Prostate gland (tissue), 2 donors: ENCODE measurements at regions of chr13 and their contacts with region 1.

Region 1: GRCh38 chr13:99176309-99177276 is 24.1 kb upstream of the UBAC2 start:
- DNase-seq: peak; percentile 69
- H3K4me3 ChIP-seq: no peak overlapping the region
- H3K27ac ChIP-seq: no peak overlapping the region
- H3K4me1 ChIP-seq: no peaks in the 10 kb centered on the region
- H3K27me3 ChIP-seq: no peaks in the 10 kb centered on the region
- CTCF ChIP-seq: peak; percentile 86 to 95 (median 90)
- POLR2A ChIP-seq: no peak

Region 2: DNA sequence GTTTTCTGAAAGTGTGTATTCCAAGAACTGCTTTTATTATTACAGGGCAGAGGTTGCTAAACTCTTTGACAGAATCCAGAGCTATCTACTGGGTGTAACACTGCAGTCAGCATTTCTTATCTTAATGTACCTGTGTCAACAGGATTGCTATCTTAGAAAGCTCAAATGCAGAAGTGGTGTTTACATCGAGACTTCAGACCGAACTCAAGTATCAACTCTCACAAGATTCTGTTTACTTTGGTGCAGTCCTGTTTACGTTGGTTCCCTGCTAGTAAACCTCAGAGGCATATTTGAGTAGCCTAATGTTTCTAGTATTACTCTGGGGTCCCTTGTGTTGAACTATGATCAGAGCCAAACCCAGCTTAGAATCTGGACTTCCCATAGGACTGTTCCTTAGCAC is 444.7 kb before region 1 on chr13:
- intact Hi-C with region 1: no loop called
- DNase-seq: no peak
- H3K4me3 ChIP-seq: no peak overlapping the region
- H3K27ac ChIP-seq: no peak overlapping the region
- H3K4me1 ChIP-seq: no peaks in the 10 kb centered on the region
- H3K27me3 ChIP-seq: no peaks in the 10 kb centered on the region
- CTCF ChIP-seq: no peak
- POLR2A ChIP-seq: no peak

Region 3: DNA sequence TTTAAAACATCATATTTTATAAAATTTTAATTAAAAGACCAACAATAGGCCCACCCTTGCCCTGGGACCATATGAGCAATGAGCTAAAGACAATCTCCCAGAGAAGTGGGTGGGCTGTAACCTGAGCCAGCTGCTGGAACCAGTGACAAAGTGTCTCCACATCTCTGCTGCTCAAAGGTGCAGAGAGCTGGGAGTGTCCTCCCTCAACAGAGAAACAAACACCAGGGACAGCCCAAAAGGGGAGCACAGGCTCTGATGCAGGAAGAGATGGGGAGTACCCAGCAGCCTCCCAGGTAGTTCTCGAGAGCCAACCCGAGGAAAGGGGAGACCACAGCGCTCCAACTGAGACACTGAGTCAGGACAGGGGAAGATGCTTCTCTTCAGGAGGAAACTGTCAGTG is 237.8 kb before region 1 on chr13:
- intact Hi-C with region 1: no loop called
- DNase-seq: no peak
- H3K4me3 ChIP-seq: no peak overlapping the region
- H3K27ac ChIP-seq: no peak overlapping the region
- H3K4me1 ChIP-seq: no peaks in the 10 kb centered on the region
- H3K27me3 ChIP-seq: no peaks in the 10 kb centered on the region
- CTCF ChIP-seq: no peak
- POLR2A ChIP-seq: no peak

Region 4: DNA sequence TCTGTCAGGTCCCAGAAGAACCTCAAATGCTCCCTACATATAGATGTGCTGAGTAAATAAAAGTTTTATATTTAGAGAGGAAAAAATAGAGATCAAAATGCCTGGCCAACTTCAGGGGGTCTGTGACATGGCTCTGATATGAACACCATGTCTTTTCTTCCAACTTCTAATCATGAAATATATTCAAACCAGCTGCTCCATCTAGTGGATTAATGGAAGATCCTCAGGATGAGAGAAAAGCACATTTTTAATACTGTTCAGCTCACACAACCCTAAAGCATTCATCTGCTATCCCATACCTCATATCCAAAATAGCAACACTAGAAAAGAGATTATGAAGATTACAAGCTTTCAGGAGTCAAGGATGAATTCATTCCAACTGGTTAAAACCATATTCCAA is 142.8 kb before region 1 on chr13:
- intact Hi-C with region 1: no loop called
- DNase-seq: no peak
- H3K4me3 ChIP-seq: no peak overlapping the region
- H3K27ac ChIP-seq: no peak overlapping the region
- H3K4me1 ChIP-seq: no peaks in the 10 kb centered on the region
- H3K27me3 ChIP-seq: no peaks in the 10 kb centered on the region
- CTCF ChIP-seq: peak in 3 of 4 experiments; percentile 44 to 72 (median 58)
- POLR2A ChIP-seq: no peak

Region 5: DNA sequence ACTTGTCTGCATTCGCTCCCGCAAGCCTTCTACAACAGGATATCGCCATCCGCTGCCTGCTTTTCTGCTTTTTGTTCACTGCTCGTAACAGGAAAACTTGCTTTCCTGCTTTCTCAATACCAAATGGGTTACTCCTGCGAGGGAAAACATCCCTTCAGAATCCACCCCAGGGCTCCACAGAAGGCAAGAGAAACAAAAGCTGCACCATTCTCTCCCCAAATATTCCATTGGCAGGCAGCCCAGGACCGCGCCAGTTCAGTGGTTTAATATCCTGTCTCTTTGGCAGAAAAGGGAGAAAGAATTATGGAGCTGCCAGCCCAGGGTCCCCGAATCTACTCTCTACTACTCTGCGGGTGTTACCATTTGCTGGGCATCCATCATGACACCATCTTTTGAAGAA is 114.0 kb before region 1 on chr13:
- intact Hi-C with region 1: no loop called
- DNase-seq: peak; percentile 38
- H3K4me3 ChIP-seq: no peak overlapping the region
- H3K27ac ChIP-seq: peak overlapping the region; percentile 30 to 39
- H3K4me1 ChIP-seq: peaks cover under 1% of the 10 kb centered on the region
- H3K27me3 ChIP-seq: no peaks in the 10 kb centered on the region
- CTCF ChIP-seq: no peak
- POLR2A ChIP-seq: no peak

Region 6: DNA sequence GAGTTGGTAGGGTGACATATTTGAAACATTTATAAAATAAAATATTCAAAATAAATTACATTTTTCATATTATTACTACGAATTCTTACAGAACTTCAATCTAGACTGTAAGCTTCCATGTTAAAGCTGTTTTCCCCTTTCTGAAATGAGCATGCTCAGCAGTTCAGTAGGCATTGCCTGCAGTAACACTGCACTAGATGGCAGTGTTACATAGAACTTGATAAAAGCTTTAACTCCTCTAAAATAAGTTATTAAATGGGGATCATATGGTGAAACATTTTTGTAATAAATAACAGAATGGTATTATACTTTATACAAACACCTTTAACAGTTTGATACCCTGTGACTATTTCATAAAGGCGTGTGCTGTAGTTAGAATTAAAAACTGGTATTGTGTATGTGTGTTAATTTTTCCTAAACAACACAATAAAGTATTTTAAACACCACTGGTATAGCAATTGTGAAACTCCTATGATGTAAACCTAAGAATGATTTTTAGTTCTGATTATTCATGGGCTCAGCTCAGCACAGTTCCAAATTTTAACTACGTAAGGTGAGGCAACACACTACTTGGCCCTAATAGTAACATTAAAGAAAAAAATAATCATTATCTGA is 93.1 kb after region 1 on chr13:
- intact Hi-C with region 1: loop called (anchors 2 kb)
- DNase-seq: no peak
- H3K4me3 ChIP-seq: no peak overlapping the region
- H3K27ac ChIP-seq: no peak overlapping the region
- H3K4me1 ChIP-seq: no peaks in the 10 kb centered on the region
- H3K27me3 ChIP-seq: no peaks in the 10 kb centered on the region
- CTCF ChIP-seq: peak in 3 of 4 experiments; percentile 54 to 66 (median 66)
- POLR2A ChIP-seq: no peak